ENCODE measurements at regions of chr13 and their contacts with region 1.

Region 1: GRCh38 chr13:40682449-40683240 is 16.2 kb upstream of the FOXO1 start:
- DNase-seq: no peak
- ATAC-seq: no peak
- H3K4me3 ChIP-seq: no peak overlapping the region
- H3K4me1 ChIP-seq: no peaks in the 10 kb centered on the region
- CTCF ChIP-seq: no peak

Region 2: GRCh38 chr13:39684531-39685137 is 998.0 kb before region 1 on chr13:
- intact Hi-C with region 1: loop called in 1 of 2 experiments (anchors 10 kb)
- DNase-seq: no peak
- ATAC-seq: no peak
- H3K4me3 ChIP-seq: no peak overlapping the region
- H3K4me1 ChIP-seq: no peaks in the 10 kb centered on the region
- CTCF ChIP-seq: no peak

Region 3: DNA sequence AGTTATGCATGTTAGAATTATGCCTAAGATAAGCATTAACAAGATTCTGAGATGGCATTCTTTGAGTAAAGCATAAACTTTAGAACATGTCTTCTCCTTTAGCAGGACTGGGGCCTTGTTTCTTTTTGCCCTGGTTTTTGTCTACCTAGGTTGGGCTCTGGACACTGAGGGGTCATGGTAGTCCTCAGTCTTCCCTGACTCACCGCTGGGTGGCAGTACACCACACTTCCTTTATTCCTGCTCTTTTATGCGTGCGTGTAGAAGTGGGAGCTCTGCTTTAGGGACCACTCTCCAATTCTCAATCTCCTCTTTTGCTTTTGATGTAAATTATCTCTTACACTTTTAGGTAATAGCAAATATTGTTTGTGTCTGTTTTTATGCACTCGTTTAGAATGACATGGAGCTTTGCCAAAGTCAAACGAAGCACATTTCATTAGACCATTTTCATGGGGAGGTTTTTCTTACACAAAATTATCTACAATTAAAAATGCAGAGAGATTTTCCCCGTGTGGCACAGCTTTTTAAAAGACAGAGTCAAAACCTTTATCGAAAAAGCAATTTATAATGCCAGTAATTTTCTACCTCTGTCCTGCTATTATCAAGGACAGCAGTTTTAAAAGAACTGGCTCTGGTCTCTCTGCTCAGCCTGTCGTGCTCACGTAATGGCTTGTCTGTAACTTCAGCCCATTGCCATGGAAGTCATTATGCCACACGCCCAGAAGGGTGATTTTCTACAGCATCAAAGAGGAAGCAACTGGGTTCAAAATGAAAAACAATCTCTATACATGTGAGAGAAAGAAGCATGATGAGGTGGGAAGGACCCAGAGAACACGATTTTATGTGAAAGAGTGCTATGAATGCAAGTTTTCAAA is 613.2 kb before region 1 on chr13:
- intact Hi-C with region 1: loop called (anchors 2 to 5 kb)
- DNase-seq: peak in 2 of 3 donors; percentile 79 to 84
- ATAC-seq: peak; percentile 92
- H3K4me3 ChIP-seq: no peak overlapping the region
- H3K4me1 ChIP-seq: peaks cover 2% of the 10 kb centered on the region
- CTCF ChIP-seq: peak; percentile 60

Region 4: GRCh38 chr13:41811588-41812021 is 1129.0 kb after region 1 on chr13:
- intact Hi-C with region 1: no loop called
- DNase-seq: no peak
- ATAC-seq: peak; percentile 16
- H3K4me3 ChIP-seq: no peak overlapping the region
- H3K4me1 ChIP-seq: no peaks in the 10 kb centered on the region
- CTCF ChIP-seq: no peak